ENCODE measurements at regions of chr5 and their contacts with region 1.

Region 1: GRCh38 chr5:157743163-157744050 is at the start of gene LSM11:
- DNase-seq: peak; percentile 56
- ATAC-seq: peak; percentile 93
- H3K4me3 ChIP-seq: peak within 1 kb of the TSS; percentile 85
- H3K27ac ChIP-seq: peak within 1 kb of the TSS; percentile 45; the same call in 1 of the 2 replicates
- H3K4me1 ChIP-seq: peaks cover 12% of the 10 kb centered on the region; the same call in 1 of the 2 replicates
- H3K27me3 ChIP-seq: no peaks in the 10 kb centered on the region
- CTCF ChIP-seq: peak; percentile 97 to 100 (median 99); a peak in 5 of 6 replicates
- EP300 ChIP-seq: no peak
- POLR2A ChIP-seq: peak; percentile 64
- RAD21 ChIP-seq: peak; percentile 87
- polyA plus RNA-seq, gene LSM11: 1.5 to 2.1 TPM

Region 2: DNA sequence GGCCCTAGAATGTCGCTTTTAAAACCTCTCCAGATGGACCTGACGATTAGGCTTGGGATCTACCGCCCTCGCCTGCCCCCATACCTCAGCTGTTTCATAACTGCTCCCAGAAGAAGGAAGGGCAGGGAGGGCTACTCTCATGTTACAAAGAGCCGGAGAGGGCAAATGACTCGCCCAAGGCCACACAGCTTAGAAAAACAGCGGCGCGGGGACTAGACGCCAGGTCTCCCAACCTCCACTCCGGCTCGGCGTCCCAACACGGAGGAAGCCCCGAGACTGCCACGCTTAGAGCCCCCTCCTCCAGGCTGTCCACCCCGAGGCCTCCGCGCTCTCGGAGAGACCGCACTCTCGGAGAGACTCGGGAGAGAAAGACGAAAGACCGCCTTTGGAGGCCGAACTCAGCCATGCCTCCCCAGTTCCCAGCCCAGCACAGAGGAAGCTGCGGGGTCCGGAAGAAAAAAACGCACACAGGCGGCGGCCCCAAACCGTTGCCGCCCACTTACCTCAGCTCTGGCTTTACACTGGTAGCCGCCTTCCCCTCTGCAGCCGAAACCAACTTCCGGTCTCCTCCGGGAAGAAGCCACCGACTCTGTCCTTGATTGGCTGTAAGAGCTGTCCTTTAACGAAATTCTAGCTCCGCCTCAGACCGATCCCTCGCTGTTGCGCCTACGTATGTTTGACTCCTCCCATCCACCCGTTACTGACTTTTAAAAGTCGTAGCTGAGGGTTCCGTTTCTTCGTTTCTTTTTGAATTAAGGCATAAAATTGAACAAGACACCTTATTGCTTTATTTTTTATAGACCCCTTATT is 600.9 kb before region 1 on chr5 and contains the start of gene MED7:
- CTCF ChIA-PET with region 1: no interaction called
- POLR2A ChIA-PET with region 1: no interaction called
- RAD21 ChIA-PET with region 1: no interaction called
- SMC1A ChIA-PET with region 1: no interaction called
- in situ Hi-C with region 1: no loop called
- intact Hi-C with region 1: loop called (anchors 10 kb)
- DNase-seq: peak; percentile 99
- ATAC-seq: peak; percentile 100
- H3K4me3 ChIP-seq: peak within 1 kb of the TSS; percentile 88
- H3K27ac ChIP-seq: peak within 1 kb of the TSS; percentile 99
- H3K4me1 ChIP-seq: peaks cover 7% of the 10 kb centered on the region
- H3K27me3 ChIP-seq: no peaks in the 10 kb centered on the region
- CTCF ChIP-seq: no peak
- EP300 ChIP-seq: no peak
- POLR2A ChIP-seq: peak; percentile 96
- RAD21 ChIP-seq: no peak
- polyA plus RNA-seq, gene MED7: 42.6 to 47.7 TPM

Region 3: GRCh38 chr5:157342822-157343402 is 400.5 kb before region 1 on chr5:
- CTCF ChIA-PET with region 1: interaction called, 16 read pairs
- POLR2A ChIA-PET with region 1: no interaction called
- RAD21 ChIA-PET with region 1: interaction called, 3 read pairs
- SMC1A ChIA-PET with region 1: interaction called, 4 read pairs
- in situ Hi-C with region 1: no loop called
- intact Hi-C with region 1: loop called (anchors 5 kb)
- DNase-seq: no peak
- ATAC-seq: peak; percentile 81
- H3K4me3 ChIP-seq: no peak overlapping the region
- H3K27ac ChIP-seq: no peak overlapping the region
- H3K4me1 ChIP-seq: no peaks in the 10 kb centered on the region
- H3K27me3 ChIP-seq: no peaks in the 10 kb centered on the region
- CTCF ChIP-seq: peak; percentile 46 to 68 (median 51)
- EP300 ChIP-seq: no peak
- POLR2A ChIP-seq: no peak
- RAD21 ChIP-seq: peak; percentile 15; the same call in 1 of the 2 replicates

Region 4: DNA sequence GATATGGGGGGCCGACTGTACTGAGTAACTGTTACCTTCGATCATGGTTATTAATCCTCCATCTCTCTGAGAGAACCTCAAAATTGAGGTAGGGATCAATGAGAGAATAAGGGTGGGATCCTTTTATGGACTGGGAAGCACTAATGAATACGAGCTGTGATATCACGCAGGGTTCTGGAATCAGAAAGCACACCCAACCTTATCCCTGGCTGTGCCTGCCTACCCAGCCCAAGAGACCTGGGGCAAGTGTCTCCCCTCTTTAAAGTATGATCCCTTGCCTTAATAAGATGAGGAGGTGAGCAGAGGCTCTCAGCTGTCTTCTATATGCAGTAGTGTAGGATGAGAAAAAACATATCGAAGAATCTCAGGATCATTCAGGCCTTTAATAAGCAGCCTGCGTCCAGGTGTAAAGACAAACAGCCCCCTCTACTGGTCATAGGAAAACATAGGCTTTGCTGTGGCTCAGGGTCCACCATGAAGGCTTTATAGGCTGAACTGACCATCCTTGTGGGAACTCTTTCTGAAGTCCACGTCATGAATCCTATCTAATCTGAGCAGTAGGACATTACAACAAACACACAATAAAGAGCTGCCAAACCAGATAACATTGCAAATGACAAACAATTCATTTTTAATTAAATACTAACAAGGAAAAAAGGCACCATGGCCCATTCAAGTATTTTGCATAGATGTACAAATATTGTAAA is 266.6 kb before region 1 on chr5:
- CTCF ChIA-PET with region 1: interaction called, 10 read pairs
- POLR2A ChIA-PET with region 1: no interaction called
- RAD21 ChIA-PET with region 1: interaction called, 6 read pairs
- SMC1A ChIA-PET with region 1: interaction called, 3 read pairs
- in situ Hi-C with region 1: no loop called
- intact Hi-C with region 1: no loop called
- DNase-seq: no peak
- ATAC-seq: peak; percentile 85
- H3K4me3 ChIP-seq: no peak overlapping the region
- H3K27ac ChIP-seq: no peak overlapping the region
- H3K4me1 ChIP-seq: no peaks in the 10 kb centered on the region
- H3K27me3 ChIP-seq: no peaks in the 10 kb centered on the region
- CTCF ChIP-seq: peak; percentile 74 to 77 (median 77)
- EP300 ChIP-seq: no peak
- POLR2A ChIP-seq: no peak
- RAD21 ChIP-seq: peak; percentile 89

Region 5: GRCh38 chr5:157710872-157711271 is 32.5 kb before region 1 on chr5:
- CTCF ChIA-PET with region 1: interaction called, 10 read pairs
- POLR2A ChIA-PET with region 1: no interaction called
- RAD21 ChIA-PET with region 1: no interaction called
- SMC1A ChIA-PET with region 1: interaction called, 4 read pairs
- in situ Hi-C with region 1: no loop called
- intact Hi-C with region 1: no loop called
- DNase-seq: no peak
- ATAC-seq: peak; percentile 60
- H3K4me3 ChIP-seq: no peak overlapping the region
- H3K27ac ChIP-seq: no peak overlapping the region
- H3K4me1 ChIP-seq: no peaks in the 10 kb centered on the region
- H3K27me3 ChIP-seq: no peaks in the 10 kb centered on the region
- CTCF ChIP-seq: no peak
- EP300 ChIP-seq: no peak
- POLR2A ChIP-seq: no peak
- RAD21 ChIP-seq: no peak

Region 6: DNA sequence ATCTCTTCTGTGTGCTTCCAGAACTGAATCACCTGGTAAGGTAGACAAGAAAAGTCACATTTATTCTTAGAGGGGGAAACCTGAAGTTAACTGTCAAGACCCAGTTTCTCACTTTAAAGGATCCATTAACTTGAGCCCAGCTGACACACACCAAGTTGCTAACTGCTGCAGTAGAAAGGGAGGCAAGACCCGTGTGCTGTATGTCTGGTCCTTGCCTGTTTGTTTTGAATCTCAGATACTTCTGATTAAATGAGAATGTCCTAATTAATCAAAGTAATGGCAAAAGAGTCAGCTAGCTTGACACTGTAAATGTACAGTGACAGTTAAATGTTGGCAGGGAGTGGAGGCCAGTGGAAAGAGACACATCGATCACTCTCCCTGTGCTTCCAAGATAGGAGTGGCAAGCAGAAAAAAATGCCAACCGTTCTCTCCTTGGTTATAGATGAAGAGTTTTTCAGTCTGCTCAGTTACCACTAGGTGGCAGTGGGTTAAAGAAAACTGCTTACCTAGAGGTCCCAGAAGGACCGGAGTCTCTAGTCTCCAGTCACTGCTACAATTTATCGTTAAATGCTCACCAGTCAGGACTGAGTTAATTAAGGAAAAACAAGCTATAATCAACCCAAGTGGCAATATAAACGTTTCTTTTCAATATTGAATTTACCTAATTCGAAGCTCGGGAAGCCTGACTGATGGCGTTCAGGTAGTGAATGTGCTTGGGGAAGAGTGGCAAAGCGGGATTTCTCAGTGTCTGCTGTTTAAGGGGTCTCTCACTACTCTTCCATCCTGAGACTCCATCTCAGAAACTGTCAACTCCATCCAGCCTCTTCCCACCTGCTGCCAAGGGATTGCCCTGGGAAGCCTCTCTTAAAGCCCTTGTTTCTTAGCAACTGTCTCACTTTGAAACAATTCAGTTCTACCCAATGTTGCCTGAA is 18.5 kb after region 1 on chr5:
- CTCF ChIA-PET with region 1: interaction called, 19 read pairs
- POLR2A ChIA-PET with region 1: no interaction called
- RAD21 ChIA-PET with region 1: no interaction called
- SMC1A ChIA-PET with region 1: no interaction called
- in situ Hi-C with region 1: no loop called
- intact Hi-C with region 1: no loop called
- DNase-seq: no peak
- ATAC-seq: peak; percentile 99
- H3K4me3 ChIP-seq: no peak overlapping the region
- H3K27ac ChIP-seq: no peak overlapping the region
- H3K4me1 ChIP-seq: 0 out of 2 replicates have a peak, but pooled peaks cover 3% of the 10 kb centered on the region
- H3K27me3 ChIP-seq: no peaks in the 10 kb centered on the region
- CTCF ChIP-seq: peak; percentile 71 to 81 (median 79)
- EP300 ChIP-seq: no peak
- POLR2A ChIP-seq: no peak
- RAD21 ChIP-seq: peak; percentile 73

Region 7: GRCh38 chr5:158435161-158435616 is 691.8 kb after region 1 on chr5:
- CTCF ChIA-PET with region 1: no interaction called
- POLR2A ChIA-PET with region 1: no interaction called
- RAD21 ChIA-PET with region 1: no interaction called
- SMC1A ChIA-PET with region 1: no interaction called
- in situ Hi-C with region 1: no loop called
- intact Hi-C with region 1: no loop called
- DNase-seq: peak; percentile 47
- ATAC-seq: peak; percentile 85
- H3K4me3 ChIP-seq: no peak overlapping the region
- H3K27ac ChIP-seq: no peak overlapping the region
- H3K4me1 ChIP-seq: peaks cover 20% of the 10 kb centered on the region
- H3K27me3 ChIP-seq: no peaks in the 10 kb centered on the region
- CTCF ChIP-seq: no peak
- EP300 ChIP-seq: no peak
- POLR2A ChIP-seq: no peak
- RAD21 ChIP-seq: no peak

Measured in GM12878 (cell line).